Heart left ventricle (tissue), 16 donors: ENCODE measurements at regions of chr11 and their contacts with region 1.

Region 1: GRCh38 chr11:86802601-86803051 is 2.3 kb downstream of the PRSS23 start:
- DNase-seq: no peak
- ATAC-seq: peak in 2 of 4 donors; percentile 20 to 47
- H3K4me3 ChIP-seq: peak overlapping the region in 6 of 12 donors; percentile 15 to 92 (median 75)
- H3K27ac ChIP-seq: peak overlapping the region in 1 of 12 donors; percentile 83
- H3K4me1 ChIP-seq: peaks cover 0 to 39% (median 18%) of the 10 kb centered on the region in 12 donors
- H3K27me3 ChIP-seq: peaks cover 0 to 15% (median 0%) of the 10 kb centered on the region in 9 donors
- CTCF ChIP-seq: peak; percentile 28 to 64 (median 44)
- POLR2A ChIP-seq: no peak

Region 2: DNA sequence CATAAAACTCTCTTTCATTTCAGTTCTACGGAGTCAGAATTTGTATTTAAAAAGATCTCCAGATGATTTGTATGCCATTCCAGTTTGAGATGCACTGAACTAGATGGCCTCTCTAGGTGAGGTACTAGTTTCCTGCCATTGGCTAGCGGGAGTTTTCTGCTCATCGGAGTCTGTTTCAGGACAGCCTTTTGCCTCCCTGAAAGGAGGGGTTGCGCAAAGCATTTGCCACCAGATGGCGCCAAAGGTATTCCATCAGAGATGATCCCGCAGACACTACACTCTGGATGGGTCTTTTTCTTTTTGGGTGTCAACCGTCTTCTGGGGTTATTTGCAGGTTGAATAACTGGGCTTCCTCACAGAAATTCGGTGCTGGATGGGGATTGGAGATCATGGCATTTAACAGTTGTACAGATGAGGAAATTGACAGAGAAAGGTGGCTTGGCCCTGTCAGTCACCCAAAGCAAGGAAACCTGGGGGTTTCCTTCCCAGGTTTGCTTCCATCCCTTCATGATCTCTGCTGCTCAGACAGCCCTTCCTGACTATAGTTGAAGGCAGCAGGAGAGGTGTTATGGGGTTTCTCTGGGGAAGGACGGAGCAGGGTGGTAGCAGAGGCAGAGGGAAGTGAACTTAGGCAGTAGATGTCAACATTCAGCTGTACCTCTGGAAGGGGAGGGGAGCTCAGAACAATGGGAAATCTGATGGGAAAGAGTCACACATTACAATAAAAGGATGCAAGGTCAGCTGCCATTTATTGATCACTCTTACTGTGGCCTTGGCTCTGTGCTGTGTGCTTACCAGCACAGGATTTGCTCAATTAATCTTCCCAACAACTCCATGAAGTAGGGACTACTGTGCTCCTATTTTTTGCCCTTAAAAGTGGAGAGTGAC is 346.3 kb before region 1 on chr11:
- intact Hi-C with region 1: loop called in 6 of 10 experiments (anchors 5 kb)
- DNase-seq: peak; percentile 82 to 86 (median 85)
- ATAC-seq: peak; percentile 47 to 83 (median 78)
- H3K4me3 ChIP-seq: no peak overlapping the region
- H3K27ac ChIP-seq: peak overlapping the region in 6 of 12 donors; percentile 20 to 61 (median 39)
- H3K4me1 ChIP-seq: peaks cover 3 to 55% (median 37%) of the 10 kb centered on the region in 12 donors
- H3K27me3 ChIP-seq: no peaks in the 10 kb centered on the region
- CTCF ChIP-seq: peak; percentile 83 to 97 (median 91)
- POLR2A ChIP-seq: no peak

Region 3: GRCh38 chr11:86620891-86621521 is 181.6 kb before region 1 on chr11:
- intact Hi-C with region 1: loop called in 1 of 10 experiments (anchors 10 kb)
- DNase-seq: no peak
- ATAC-seq: peak in 2 of 4 donors; percentile 43 to 66
- H3K4me3 ChIP-seq: no peak overlapping the region
- H3K27ac ChIP-seq: peak overlapping the region in 11 of 12 donors; percentile 7 to 74 (median 47)
- H3K4me1 ChIP-seq: peaks cover 2 to 58% (median 27%) of the 10 kb centered on the region in 12 donors
- H3K27me3 ChIP-seq: no peaks in the 10 kb centered on the region
- CTCF ChIP-seq: no peak
- POLR2A ChIP-seq: no peak

Region 4: GRCh38 chr11:86632499-86633269 is 169.9 kb before region 1 on chr11:
- intact Hi-C with region 1: loop called in 2 of 10 experiments (anchors 5 to 10 kb)
- DNase-seq: peak in 1 of 5 donors; percentile 55
- ATAC-seq: peak in 3 of 4 donors; percentile 32 to 57 (median 55)
- H3K4me3 ChIP-seq: no peak overlapping the region
- H3K27ac ChIP-seq: no peak overlapping the region
- H3K4me1 ChIP-seq: peaks cover 0 to 44% (median 30%) of the 10 kb centered on the region in 12 donors
- H3K27me3 ChIP-seq: no peaks in the 10 kb centered on the region
- CTCF ChIP-seq: peak in 7 of 12 donors; percentile 18 to 46 (median 32)
- POLR2A ChIP-seq: no peak